ENCODE measurements at regions of chr1 and their contacts with region 1.

Region 1: DNA sequence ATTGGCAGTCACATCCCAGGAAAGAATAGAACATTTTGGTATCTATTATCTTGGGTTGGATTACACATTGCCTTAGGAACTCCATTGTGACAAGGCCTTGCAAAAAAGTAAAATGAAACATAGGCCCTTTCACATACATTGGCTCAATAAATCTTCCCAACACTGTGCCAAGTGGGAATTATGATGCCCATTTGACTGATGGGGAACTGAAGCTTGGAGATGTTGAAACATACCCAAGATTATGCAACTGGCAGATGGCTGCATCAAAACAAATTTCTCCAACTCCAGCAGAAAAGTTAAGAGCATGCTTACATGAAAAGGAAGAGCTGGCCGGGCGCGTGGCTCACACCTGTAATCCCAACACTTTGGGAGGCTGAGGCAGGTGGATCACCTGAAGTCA is 26.9 kb downstream of the PLEKHO1 start:
- DNase-seq: no peak

Region 2: DNA sequence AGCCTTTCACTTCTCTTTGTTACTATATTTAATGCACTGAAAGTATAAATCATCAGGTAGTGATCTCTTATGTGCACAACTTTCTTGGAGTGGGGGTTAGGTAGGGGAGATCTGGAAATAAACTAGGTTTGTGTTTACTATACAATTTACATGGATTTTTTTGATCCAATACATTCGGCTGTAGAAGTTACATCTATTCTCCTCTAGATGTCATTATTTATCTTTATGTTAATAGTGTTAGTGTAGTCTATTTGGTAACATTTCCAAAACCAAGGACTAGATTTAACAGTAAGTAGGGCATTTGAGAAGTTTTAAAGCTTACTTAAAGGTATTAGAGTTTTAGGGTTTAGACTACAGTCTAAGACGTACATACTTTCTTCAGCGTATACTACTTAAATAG is 103.6 kb before region 1 on chr1:
- in situ Hi-C with region 1: loop called (anchors 10 kb)
- DNase-seq: peak; percentile 42